Caco-2 (cell line): ENCODE measurements at regions of chr4 and their contacts with region 1.

Region 1: DNA sequence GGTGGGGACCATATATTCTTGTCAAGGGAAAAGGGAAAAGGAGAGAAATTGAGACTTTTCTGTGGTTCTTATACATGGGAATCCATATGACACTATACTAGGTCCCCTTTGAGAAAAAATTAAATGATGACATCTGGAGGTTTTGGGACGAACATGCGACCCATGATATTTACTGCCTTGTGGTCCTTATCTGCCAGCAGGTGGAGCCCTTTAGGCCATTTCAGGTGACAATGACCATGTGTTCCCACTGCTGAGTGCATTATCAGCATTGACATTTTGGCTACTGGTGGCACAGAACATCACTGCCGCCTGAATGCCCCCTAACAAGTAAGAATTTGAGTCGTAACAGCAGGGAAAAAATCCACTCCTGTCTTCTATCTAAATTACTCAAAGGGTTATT is 843.4 kb downstream of the FSTL5 start:
- DNase-seq: peak; percentile 44 to 46
- H3K4me3 ChIP-seq: no peak overlapping the region
- H3K4me3 Mint-ChIP-seq: no peak overlapping the region
- H3K27ac Mint-ChIP-seq: no peak overlapping the region
- H3K4me1 ChIP-seq: no peaks in the 10 kb centered on the region
- H3K4me1 Mint-ChIP-seq: no peaks in the 10 kb centered on the region
- H3K27me3 ChIP-seq: no peaks in the 10 kb centered on the region
- H3K27me3 Mint-ChIP-seq: no peaks in the 10 kb centered on the region
- CTCF ChIP-seq: peak; percentile 43 to 65

Region 2: DNA sequence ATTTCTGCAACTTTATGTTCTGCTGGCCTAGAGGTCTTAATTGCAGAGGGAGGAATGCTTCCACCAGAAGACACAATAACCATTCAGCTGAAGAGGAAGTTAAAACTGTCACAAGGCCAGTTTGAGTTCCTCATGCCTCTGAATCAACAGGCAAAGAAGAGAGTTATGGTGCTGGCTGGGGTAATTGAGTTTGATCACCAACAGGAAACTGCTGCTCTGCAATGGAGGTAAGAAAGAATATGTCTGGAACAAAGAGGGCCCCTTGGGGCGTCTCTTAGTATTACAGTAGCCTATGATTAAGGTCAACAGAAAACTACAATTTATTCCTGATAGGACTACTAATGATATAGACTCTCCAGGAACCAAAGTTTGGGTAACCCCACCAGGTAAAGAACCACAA is 99.4 kb after region 1 on chr4:
- CTCF ChIA-PET with region 1: no interaction called
- POLR2A ChIA-PET with region 1: no interaction called
- intact Hi-C with region 1: loop called (anchors 1 kb)
- DNase-seq: peak in 1 of 2 experiments; percentile 7
- H3K4me3 ChIP-seq: no peak overlapping the region
- H3K4me3 Mint-ChIP-seq: no peak overlapping the region
- H3K27ac Mint-ChIP-seq: no peak overlapping the region
- H3K4me1 ChIP-seq: no peaks in the 10 kb centered on the region
- H3K4me1 Mint-ChIP-seq: no peaks in the 10 kb centered on the region
- H3K27me3 ChIP-seq: no peaks in the 10 kb centered on the region
- H3K27me3 Mint-ChIP-seq: no peaks in the 10 kb centered on the region
- CTCF ChIP-seq: no peak

Region 3: GRCh38 chr4:161442921-161443320 is 122.5 kb after region 1 on chr4:
- CTCF ChIA-PET with region 1: no interaction called
- POLR2A ChIA-PET with region 1: no interaction called
- intact Hi-C with region 1: loop called (anchors 1 kb)
- DNase-seq: no peak
- H3K4me3 ChIP-seq: no peak overlapping the region
- H3K4me3 Mint-ChIP-seq: no peak overlapping the region
- H3K27ac Mint-ChIP-seq: no peak overlapping the region
- H3K4me1 ChIP-seq: no peaks in the 10 kb centered on the region
- H3K4me1 Mint-ChIP-seq: no peaks in the 10 kb centered on the region
- H3K27me3 ChIP-seq: no peaks in the 10 kb centered on the region
- H3K27me3 Mint-ChIP-seq: no peaks in the 10 kb centered on the region
- CTCF ChIP-seq: no peak

Region 4: GRCh38 chr4:161762796-161763195 is 442.4 kb after region 1 on chr4:
- CTCF ChIA-PET with region 1: no interaction called
- POLR2A ChIA-PET with region 1: no interaction called
- intact Hi-C with region 1: no loop called
- DNase-seq: no peak
- H3K4me3 ChIP-seq: no peak overlapping the region
- H3K4me3 Mint-ChIP-seq: no peak overlapping the region
- H3K27ac Mint-ChIP-seq: no peak overlapping the region
- H3K4me1 ChIP-seq: no peaks in the 10 kb centered on the region
- H3K4me1 Mint-ChIP-seq: no peaks in the 10 kb centered on the region
- H3K27me3 ChIP-seq: no peaks in the 10 kb centered on the region
- H3K27me3 Mint-ChIP-seq: no peaks in the 10 kb centered on the region
- CTCF ChIP-seq: no peak

Region 5: DNA sequence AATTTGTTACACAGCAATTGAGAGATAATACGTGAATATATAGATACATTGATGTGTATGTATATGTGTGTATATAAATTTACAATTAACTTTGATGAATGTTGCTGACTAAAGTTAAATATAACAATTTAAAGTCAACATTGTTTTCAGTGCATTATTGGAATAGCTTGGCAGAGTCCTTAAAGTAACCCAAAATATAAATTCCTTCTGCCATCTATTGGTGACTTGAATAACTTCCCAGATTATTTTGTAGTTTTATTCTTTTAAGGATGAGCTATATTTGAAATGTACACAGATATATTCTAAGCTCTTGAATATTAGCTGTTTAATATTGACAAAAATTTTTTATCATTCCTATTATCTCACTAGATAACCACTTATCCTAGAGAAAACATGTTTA is 1141.6 kb after region 1 on chr4:
- CTCF ChIA-PET with region 1: no interaction called
- POLR2A ChIA-PET with region 1: no interaction called
- intact Hi-C with region 1: loop called (anchors 5 kb)
- DNase-seq: no peak
- H3K4me3 ChIP-seq: no peak overlapping the region
- H3K4me3 Mint-ChIP-seq: no peak overlapping the region
- H3K27ac Mint-ChIP-seq: no peak overlapping the region
- H3K4me1 ChIP-seq: no peaks in the 10 kb centered on the region
- H3K4me1 Mint-ChIP-seq: no peaks in the 10 kb centered on the region
- H3K27me3 ChIP-seq: no peaks in the 10 kb centered on the region
- H3K27me3 Mint-ChIP-seq: no peaks in the 10 kb centered on the region
- CTCF ChIP-seq: no peak